ENCODE measurements at regions of chr10 and their contacts with region 1.

Region 1: DNA sequence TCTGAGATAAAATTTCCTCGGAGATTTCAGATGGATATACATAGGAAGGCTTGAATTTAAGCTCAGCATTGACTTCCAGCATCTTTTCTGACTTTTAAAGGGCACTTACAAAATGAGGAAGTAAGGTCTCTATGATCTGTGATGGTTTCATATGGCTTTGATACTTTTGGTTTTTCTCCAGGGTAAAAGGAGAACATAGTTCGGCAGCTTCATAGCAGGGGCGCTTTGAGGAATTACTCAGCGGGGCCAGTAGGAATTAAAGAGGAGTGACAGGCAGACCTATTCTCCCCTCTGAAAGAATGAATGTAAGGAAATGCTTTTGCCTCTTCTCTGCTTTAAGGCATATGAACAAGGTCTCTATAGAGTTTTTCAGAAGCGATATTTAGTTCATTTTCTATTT is 80.0 kb upstream of the PCDH15 start:
- DNase-seq: no peak
- H3K4me3 ChIP-seq: no peak overlapping the region
- H3K27ac ChIP-seq: no peak overlapping the region
- H3K4me1 ChIP-seq: no peaks in the 10 kb centered on the region
- H3K27me3 ChIP-seq: no peaks in the 10 kb centered on the region
- CTCF ChIP-seq: no peak
- POLR2A ChIP-seq: no peak

Region 2: DNA sequence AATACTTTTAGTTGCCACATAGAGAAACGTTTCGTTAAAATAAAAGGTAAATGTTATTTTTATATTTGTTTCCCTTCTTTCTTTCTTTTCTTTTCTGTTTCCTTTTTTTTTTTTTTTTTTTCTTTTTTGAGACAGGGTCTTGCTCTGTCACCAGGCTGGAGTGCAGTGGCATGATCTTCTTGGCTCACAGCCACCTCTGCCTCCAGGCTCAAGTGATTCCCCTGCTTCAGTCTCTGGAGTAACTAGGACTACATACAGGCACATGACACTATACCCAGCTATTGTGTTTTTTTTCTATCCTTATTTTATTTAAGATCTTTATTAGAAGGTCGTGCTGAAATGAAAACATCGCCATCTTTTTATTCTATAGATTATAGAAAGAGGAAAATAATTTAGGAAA is 1446.6 kb before region 1 on chr10:
- intact Hi-C with region 1: no loop called
- DNase-seq: no peak
- H3K4me3 ChIP-seq: no peak overlapping the region
- H3K27ac ChIP-seq: no peak overlapping the region
- H3K4me1 ChIP-seq: no peaks in the 10 kb centered on the region
- H3K27me3 ChIP-seq: no peaks in the 10 kb centered on the region
- CTCF ChIP-seq: no peak
- POLR2A ChIP-seq: no peak

Region 3: DNA sequence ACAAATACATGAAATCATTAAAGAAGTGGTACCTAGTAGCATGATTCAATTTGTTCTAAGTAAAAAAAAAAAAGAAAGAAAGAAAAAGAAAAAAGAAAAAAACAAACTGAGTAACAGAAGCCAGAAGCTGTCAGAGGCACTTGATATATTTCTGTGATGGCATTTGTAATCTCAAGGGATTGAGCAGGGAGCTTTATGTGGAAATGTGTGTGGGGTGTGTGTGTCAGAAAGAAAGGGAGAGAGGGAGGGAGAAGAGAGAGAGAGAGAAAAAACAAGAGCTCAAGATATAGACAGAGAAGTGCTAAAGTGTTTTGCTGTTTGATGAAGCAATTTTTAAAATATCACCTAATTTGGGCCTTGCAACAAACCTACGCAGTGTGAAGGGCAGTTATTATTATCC is 277.6 kb after region 1 on chr10:
- intact Hi-C with region 1: loop called (anchors 5 kb)
- DNase-seq: no peak
- H3K4me3 ChIP-seq: no peak overlapping the region
- H3K27ac ChIP-seq: no peak overlapping the region
- H3K4me1 ChIP-seq: no peaks in the 10 kb centered on the region
- H3K27me3 ChIP-seq: no peaks in the 10 kb centered on the region
- CTCF ChIP-seq: no peak
- POLR2A ChIP-seq: no peak

Measured in vagina (tissue), 2 donors.